Activated CD4-positive, alpha-beta T cell treated with anti-CD3 and anti-CD28 coated beads for 36 hours (primary cell): ENCODE measurements at regions of chr10 and their contacts with region 1.

Region 1: DNA sequence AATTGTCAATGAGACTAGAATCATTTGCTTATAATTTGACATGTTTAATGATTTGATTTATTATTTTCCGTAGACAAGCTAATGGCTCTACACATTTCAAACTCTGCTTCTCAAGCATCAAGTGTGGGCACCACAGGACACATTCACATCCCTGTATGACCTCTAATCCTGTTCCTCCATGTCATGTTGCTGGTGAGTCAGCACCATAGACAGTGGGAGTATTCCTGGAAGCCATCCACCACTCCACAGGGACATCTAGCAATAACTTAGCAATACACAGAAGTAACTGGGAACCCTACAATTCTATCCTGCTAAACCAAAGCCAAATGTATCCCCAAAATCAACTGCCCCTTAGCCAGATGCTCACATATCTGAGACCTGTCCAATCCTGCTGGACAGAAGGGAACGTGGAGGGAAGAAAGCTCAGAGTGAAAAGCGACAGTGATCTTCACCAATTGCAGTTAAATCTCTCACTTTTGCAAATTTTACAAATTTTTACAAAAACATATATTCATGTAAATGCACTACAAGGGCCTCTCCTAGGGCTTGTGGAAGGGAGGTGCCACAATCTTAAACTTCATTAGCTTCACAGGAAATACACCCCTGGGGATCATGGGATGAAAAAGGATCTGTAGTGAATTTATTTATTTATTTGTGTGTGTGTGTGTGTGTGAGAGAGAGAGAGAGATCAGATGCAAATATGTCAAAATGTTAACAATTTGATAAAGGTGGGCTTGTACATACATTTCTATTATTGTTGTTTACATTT is 126.5 kb downstream of the GFRA1 start:
- DNase-seq: no peak
- ATAC-seq: no peak
- H3K4me3 Mint-ChIP-seq: peak overlapping the region; percentile 19
- H3K27ac Mint-ChIP-seq: peak overlapping the region; percentile 62
- H3K4me1 Mint-ChIP-seq: peaks cover 17% of the 10 kb centered on the region
- H3K27me3 Mint-ChIP-seq: no peaks in the 10 kb centered on the region

Region 2: GRCh38 chr10:116170815-116171250 is 24.3 kb after region 1 on chr10:
- CTCF ChIA-PET with region 1: no interaction called
- POLR2A ChIA-PET with region 1: no interaction called
- intact Hi-C with region 1: no loop called
- DNase-seq: no peak
- ATAC-seq: no peak
- H3K4me3 Mint-ChIP-seq: no peak overlapping the region
- H3K27ac Mint-ChIP-seq: no peak overlapping the region
- H3K4me1 Mint-ChIP-seq: no peaks in the 10 kb centered on the region
- H3K27me3 Mint-ChIP-seq: no peaks in the 10 kb centered on the region

Region 3: DNA sequence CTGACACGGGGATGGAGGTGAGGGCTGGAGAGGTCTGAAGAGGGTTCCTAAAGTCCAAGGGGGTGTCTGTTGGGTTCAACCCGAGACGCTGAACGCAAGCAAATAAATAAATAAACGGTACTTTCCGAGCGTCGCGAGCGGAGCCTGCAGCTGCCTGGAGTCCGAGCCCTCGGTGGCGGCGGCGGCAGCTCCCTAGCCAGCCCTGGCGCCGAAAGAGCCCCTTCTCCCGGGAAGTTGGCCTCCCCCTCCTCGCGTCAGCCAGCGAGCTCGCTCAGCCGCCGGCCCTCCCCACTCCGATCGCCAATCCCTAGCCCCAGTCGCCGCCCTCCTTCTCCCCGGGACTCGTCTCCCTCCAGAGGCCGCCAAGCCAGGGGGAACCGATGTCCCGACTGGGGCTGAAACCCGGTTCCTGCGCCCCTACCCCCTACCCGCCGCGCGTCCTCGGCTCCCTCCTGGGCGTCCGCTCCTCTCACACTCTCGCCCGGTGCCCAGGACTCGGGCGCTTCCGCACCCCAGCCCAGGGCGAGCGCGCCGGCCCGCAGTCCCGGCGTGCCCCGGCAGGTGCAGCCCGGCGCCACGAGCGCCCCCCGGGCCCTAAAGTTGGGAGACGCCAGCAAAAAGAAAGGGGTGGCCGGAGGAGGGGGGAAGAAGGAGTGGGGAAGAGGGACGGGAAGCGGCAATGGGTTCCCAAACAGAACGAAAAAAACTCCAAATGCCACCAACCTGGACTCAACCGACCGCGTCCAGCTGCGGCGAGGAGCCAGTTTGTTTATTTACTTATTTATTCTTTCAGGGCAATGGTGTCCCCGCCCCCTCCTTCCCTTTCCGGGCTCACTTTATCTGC is 126.1 kb after region 1 on chr10 and contains the start of gene GFRA1:
- CTCF ChIA-PET with region 1: no interaction called
- POLR2A ChIA-PET with region 1: no interaction called
- intact Hi-C with region 1: loop called in 1 of 2 experiments (anchors 5 kb)
- DNase-seq: peak; percentile 14
- ATAC-seq: peak; percentile 51
- H3K4me3 Mint-ChIP-seq: peak within 1 kb of the TSS; percentile 58
- H3K27ac Mint-ChIP-seq: no peak within 1 kb of the TSS
- H3K4me1 Mint-ChIP-seq: peaks cover 13% of the 10 kb centered on the region
- H3K27me3 Mint-ChIP-seq: peaks cover 64% of the 10 kb centered on the region
- total RNA-seq, gene GFRA1: 0.09 to 0.11 TPM